ENCODE measurements at regions of chr21 and their contacts with region 1.

Region 1: DNA sequence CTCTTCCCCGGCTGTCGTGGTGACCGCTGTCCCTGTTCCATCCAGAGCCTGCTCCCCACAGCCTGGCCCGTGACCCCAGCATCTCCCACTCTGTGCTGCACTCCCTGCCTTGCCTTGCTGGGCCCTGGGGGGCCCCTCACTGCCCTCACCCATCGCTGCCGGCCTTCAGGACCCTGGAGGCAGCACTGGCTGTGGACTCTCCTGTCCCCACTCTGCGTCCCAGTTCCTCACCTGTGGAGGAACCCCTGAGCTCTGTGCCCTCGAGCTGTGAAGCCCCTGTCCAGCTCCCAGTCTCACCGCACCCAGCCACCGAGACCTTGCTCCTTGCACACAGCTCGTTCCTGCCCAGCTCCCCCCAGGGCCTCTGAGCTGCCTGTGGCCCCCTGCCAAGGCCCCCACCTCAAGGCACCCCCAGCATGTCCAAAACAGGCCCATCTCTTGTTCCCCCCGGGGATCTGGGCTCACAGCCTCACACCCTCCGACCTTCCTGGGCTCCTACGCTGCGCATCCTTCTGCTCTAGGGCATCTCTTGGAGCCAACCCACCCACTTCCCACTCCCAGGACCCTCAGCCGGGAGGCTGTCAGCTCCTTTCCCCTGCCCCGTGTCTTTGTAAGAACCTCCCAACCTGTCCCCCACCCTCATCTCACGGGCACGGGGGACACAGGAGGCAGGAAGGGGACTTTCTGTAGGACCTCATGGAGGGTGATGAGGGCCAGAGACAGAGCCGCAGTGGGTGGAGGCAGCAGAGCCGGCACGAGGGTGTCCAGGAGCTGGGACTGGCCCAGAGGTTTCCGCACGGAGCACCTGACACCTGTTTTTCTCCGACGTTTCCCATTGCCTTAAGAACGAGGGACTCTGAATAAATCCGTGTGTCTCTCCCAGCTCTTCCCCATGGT is 109.3 kb downstream of the WDR4 start:
- DNase-seq: no peak
- H3K4me3 ChIP-seq: no peak overlapping the region
- H3K27ac ChIP-seq: no peak overlapping the region
- H3K4me1 ChIP-seq: no peaks in the 10 kb centered on the region
- H3K27me3 ChIP-seq: no peaks in the 10 kb centered on the region
- CTCF ChIP-seq: no peak

Region 2: GRCh38 chr21:42737951-42738590 is 32.0 kb before region 1 on chr21:
- CTCF ChIA-PET with region 1: no interaction called
- dilution Hi-C with region 1: loop called (anchors 5 kb)
- in situ Hi-C with region 1: no loop called
- intact Hi-C with region 1: no loop called
- DNase-seq: no peak
- H3K4me3 ChIP-seq: no peak overlapping the region
- H3K27ac ChIP-seq: no peak overlapping the region
- H3K4me1 ChIP-seq: no peaks in the 10 kb centered on the region
- H3K27me3 ChIP-seq: no peaks in the 10 kb centered on the region
- CTCF ChIP-seq: no peak